ENCODE measurements at regions of chr20 and their contacts with region 1.

Region 1: GRCh38 chr20:63864847-63865640 is at the start of gene TPD52L2:
- DNase-seq: peak; percentile 87
- H3K4me3 ChIP-seq: peak within 1 kb of the TSS; percentile 85
- H3K27me3 ChIP-seq: no peaks in the 10 kb centered on the region
- CTCF ChIP-seq: no peak
- polyA plus RNA-seq, gene TPD52L2: 243 and 288 TPM in 2 replicates

Region 2: DNA sequence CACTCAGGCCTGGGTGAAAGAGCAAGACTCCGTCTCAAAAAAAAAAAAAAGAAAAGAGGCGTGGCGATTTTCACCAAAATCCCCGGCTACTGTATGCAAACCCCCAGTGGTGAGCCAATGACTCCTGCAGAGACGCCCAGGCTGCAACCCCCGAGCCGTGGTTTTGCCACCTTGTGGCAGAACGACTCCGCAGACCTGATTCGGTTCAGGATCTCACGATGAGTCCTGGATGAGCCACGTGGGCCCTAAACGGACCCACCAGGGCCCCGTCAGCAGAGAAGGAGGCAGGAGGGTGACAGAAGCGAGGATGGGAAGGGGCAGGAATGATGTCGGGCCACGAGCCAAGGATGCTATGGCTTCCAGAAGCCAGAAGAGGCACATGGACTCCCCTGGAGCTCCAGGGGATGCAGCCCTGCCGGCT is 83.0 kb before region 1 on chr20:
- CTCF ChIA-PET with region 1: interaction called, 31 read pairs
- POLR2A ChIA-PET with region 1: interaction called, 11 read pairs
- DNase-seq: no peak
- H3K4me3 ChIP-seq: no peak overlapping the region
- H3K27me3 ChIP-seq: no peaks in the 10 kb centered on the region
- CTCF ChIP-seq: no peak

Region 3: GRCh38 chr20:63854069-63854765 is 10.8 kb before region 1 on chr20:
- CTCF ChIA-PET with region 1: interaction called, 16 read pairs
- POLR2A ChIA-PET with region 1: no interaction called
- DNase-seq: no peak
- H3K4me3 ChIP-seq: no peak overlapping the region
- H3K27me3 ChIP-seq: peaks cover 2% of the 10 kb centered on the region
- CTCF ChIP-seq: no peak

Measured in BJ (cell line).